ENCODE measurements at regions of chr12 and their contacts with region 1.

Region 1: DNA sequence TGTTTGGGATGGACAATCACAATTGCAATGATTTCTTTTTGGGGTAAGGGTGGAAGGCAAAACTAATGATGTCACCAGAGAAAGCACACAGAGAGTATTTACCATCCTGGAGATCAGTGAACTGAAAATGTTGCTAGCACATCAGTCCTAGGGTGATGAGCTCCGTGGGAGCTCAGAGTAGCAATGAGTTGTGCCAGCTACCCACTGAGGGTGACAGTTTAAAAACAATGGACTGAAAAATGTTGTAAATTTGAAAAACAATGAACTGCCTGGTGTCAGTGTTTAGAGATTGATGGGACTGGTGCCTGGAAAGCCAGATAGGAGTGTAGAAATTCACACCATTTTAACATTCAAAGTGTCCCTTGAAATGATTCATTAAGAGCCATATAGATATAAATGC is 198.5 kb downstream of the ATP23 start:
- DNase-seq: no peak
- H3K4me3 ChIP-seq: peak overlapping the region in 1 of 4 experiments; percentile 8; a peak in 1 of 8 replicates
- H3K27ac ChIP-seq: no peak overlapping the region
- H3K4me1 ChIP-seq: peaks cover 0 to 10% (median 4%) of the 10 kb centered on the region in 4 experiments; a peak in 4 of 7 replicates
- H3K27me3 ChIP-seq: no peaks in the 10 kb centered on the region
- CTCF ChIP-seq: no peak
- EP300 ChIP-seq: no peak
- POLR2A ChIP-seq: no peak
- RAD21 ChIP-seq: no peak

Region 2: DNA sequence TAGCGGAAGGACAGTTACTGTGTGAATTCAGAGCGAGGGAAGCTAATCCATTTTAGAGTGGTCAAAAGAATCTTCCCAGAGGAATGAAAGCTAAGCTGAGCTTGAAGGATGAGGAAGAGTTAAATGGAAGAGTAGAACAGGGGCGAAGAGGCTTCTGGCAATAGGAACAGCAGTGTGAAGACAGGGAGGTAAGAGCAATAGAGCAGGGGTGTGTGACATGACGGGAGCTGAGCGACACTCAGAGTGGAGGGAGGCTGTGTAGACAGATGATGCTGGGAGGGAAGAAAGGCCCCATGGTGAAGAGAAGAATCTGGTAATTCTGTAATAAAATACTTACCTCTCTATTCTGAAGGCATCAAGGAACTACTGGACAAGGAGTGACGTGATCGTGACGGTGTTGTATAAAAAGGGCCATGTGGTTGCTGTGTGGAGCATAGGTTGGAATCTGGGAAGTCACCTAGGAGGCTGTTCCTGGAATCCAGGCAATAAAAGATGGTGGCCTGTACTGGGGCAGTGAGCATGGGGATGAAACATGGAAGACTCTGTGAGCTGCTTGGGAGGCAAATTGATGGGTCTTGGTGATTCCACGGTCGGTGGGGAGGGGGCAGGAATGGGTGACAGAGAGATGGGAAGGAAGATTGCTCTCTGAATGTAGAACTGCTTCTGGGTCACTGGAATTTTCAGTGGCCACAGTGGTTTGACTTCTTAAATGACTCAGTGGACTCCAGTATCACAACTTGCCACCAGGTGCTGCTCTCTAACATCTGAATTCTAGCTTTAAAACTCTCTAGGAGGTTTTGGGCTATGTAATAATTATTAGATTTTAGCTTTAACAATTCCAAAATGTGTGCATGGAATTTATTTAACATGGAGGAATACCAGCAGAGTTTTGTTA is 34.4 kb before region 1 on chr12:
- CTCF ChIA-PET with region 1: interaction called, 10 read pairs
- POLR2A ChIA-PET with region 1: no interaction called
- DNase-seq: no peak
- H3K4me3 ChIP-seq: no peak overlapping the region
- H3K27ac ChIP-seq: no peak overlapping the region
- H3K4me1 ChIP-seq: no peaks in the 10 kb centered on the region
- H3K27me3 ChIP-seq: no peaks in the 10 kb centered on the region
- CTCF ChIP-seq: peak in 2 of 3 experiments; percentile 25 to 31; a peak in 2 of 4 replicates
- EP300 ChIP-seq: no peak
- POLR2A ChIP-seq: no peak
- RAD21 ChIP-seq: peak; percentile 43 to 59

Region 3: DNA sequence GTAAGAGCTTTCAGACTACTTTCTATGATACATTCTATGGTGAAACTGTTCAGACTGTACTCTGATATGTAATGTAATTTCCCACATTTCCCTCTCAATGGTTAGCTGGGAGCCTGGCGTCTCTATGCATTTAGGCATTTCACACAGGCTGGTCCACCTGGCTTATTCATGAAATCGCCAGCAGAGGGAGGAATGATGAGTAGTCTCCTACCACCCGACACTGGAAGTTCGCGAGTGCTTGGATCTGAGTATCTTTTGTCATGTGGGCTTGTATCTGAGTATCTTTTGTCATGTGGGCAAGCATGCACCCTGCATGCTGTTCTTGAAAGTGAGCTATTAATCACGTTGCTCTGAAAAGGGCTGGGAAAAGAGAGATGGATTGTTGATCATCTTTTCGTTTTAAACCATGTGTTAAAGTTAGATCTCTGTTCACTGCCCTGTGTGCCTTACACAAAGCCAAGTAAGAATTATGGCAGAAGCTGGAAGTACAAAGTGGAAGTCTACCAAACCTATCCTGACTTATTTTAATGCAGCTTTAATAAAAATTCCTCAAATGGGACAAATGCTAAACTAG is 36.5 kb after region 1 on chr12:
- CTCF ChIA-PET with region 1: no interaction called
- POLR2A ChIA-PET with region 1: no interaction called
- DNase-seq: peak; percentile 10 to 64
- H3K4me3 ChIP-seq: no peak overlapping the region
- H3K27ac ChIP-seq: no peak overlapping the region
- H3K4me1 ChIP-seq: peaks cover 0 to 7% (median 0%) of the 10 kb centered on the region in 4 experiments; a peak in 2 of 7 replicates
- H3K27me3 ChIP-seq: no peaks in the 10 kb centered on the region
- CTCF ChIP-seq: peak; percentile 58 to 87 (median 66)
- EP300 ChIP-seq: no peak
- POLR2A ChIP-seq: no peak
- RAD21 ChIP-seq: peak; percentile 66 to 71